ENCODE measurements at regions of chr3 and their contacts with region 1.

Region 1: DNA sequence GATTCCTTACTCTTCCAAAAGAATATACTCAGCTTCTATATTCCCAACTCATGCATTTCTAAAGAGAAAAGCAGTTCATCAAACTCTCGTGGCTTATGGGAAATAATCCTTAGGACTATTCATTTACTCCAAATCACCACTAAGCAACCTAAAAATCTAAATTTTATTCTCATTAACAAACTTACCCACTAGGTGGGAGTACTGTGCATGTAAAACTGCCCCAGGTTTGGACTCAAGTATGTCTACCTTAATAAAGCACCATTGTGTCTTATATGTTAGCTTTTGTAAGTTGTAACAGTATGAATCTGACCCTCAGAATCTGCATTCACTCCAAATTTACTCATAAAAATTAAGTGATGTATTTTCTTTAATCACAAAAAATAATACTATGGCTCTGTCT is 25.3 kb downstream of the RAD18 start:
- DNase-seq: no peak
- H3K4me3 ChIP-seq: no peak overlapping the region
- H3K27ac ChIP-seq: peak overlapping the region; percentile 84
- H3K4me1 ChIP-seq: peaks cover 29% of the 10 kb centered on the region
- H3K27me3 ChIP-seq: no peaks in the 10 kb centered on the region
- CTCF ChIP-seq: peak; percentile 66

Region 2: GRCh38 chr3:8678751-8679150 is 259.3 kb before region 1 on chr3:
- CTCF ChIA-PET with region 1: no interaction called
- POLR2A ChIA-PET with region 1: no interaction called
- intact Hi-C with region 1: loop called (anchors 2 kb)
- DNase-seq: no peak
- H3K4me3 ChIP-seq: peak overlapping the region; percentile 57; the same call in 1 of the 2 replicates
- H3K27ac ChIP-seq: peak overlapping the region; percentile 95
- H3K4me1 ChIP-seq: peaks cover 53% of the 10 kb centered on the region
- H3K27me3 ChIP-seq: no peaks in the 10 kb centered on the region
- CTCF ChIP-seq: no peak

Region 3: DNA sequence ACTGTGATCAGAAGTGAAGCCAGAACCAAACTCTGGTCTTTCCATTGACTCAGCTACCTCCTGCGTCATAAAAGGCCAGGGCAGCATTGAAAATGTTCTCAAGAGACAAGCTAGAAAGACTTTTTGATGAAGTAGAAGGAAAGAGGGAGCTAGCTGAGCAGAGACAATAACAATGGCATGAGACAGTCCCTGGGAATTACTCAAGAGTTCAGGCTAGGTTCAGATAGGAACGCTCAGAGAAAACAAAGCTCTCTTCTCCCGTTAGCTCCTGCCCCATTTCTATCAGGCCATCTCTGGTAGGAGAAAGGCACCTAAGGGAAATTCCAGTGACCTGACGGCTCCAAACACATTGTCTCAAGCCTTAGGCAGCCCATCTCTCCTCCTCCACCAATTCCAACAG is 161.6 kb before region 1 on chr3:
- CTCF ChIA-PET with region 1: no interaction called
- POLR2A ChIA-PET with region 1: no interaction called
- intact Hi-C with region 1: no loop called
- DNase-seq: peak in 1 of 2 experiments; percentile 15
- H3K4me3 ChIP-seq: no peak overlapping the region
- H3K27ac ChIP-seq: no peak overlapping the region
- H3K4me1 ChIP-seq: no peaks in the 10 kb centered on the region
- H3K27me3 ChIP-seq: no peaks in the 10 kb centered on the region
- CTCF ChIP-seq: no peak

Region 4: DNA sequence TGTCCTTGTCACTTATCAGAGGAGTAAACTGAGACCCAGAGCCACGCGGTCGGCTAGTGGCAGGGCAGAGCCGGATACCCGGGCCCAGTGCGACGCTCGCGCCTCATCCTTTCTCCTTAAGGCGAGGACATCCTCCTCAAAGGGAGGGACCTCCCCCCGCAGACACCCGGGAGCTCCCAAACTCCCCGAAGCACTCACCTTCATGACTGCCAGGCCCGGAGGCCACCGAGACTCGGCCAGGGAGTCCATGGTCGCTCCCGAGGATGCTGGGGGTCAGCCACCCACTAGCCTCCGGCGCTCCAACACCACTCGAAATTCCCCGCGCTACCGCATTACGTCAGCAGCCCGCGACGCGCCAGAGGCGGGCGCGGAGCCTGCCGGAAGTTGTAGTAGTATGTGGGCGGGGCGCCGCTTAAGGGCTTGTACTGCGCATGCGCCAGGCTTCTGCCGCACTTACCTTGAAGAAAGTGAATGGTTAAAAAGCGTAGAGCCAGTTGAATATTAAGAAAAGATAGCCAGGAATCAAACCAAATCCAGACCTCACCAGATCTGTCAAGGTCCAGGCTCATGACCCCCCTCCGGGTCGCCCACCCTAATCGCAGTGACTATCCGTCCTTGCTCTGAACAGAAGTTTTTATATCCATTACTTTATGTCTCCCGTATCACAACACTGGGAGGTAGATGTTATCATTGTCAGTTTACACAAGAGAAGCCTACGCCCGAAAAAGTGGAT is 25.3 kb after region 1 on chr3 and contains the start of gene RAD18:
- CTCF ChIA-PET with region 1: no interaction called
- POLR2A ChIA-PET with region 1: no interaction called
- intact Hi-C with region 1: loop called (anchors 1 kb)
- DNase-seq: peak; percentile 70 to 90
- H3K4me3 ChIP-seq: peak within 1 kb of the TSS; percentile 69
- H3K27ac ChIP-seq: peak within 1 kb of the TSS; percentile 77
- H3K4me1 ChIP-seq: peaks cover 37% of the 10 kb centered on the region
- H3K27me3 ChIP-seq: no peaks in the 10 kb centered on the region
- CTCF ChIP-seq: no peak
- total RNA-seq, gene RAD18: 19.1 and 29.1 TPM in 2 replicates

Region 5: DNA sequence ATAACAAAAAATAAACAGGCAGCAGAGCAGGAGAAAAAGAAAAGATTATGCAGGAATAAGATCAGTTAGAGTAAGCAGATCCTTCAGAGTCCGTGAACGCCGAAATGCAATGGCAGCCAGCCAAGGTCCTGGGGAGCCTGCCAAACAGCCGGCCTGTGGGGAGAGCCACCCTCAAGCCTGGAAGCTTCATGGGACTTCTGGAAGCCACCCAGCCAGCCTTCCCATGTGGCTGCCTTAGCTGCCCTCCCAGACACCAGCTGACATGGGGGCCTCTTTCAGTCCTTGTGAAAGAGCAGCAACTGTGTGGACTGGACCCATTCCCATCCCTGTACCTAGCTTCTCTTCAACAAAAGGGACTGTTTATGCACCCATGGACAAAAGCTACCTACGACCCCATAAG is 90.1 kb after region 1 on chr3:
- CTCF ChIA-PET with region 1: no interaction called
- POLR2A ChIA-PET with region 1: no interaction called
- intact Hi-C with region 1: no loop called
- DNase-seq: no peak
- H3K4me3 ChIP-seq: no peak overlapping the region
- H3K27ac ChIP-seq: no peak overlapping the region
- H3K4me1 ChIP-seq: no peaks in the 10 kb centered on the region
- H3K27me3 ChIP-seq: 0 out of 2 replicates have a peak, but pooled peaks cover 3% of the 10 kb centered on the region
- CTCF ChIP-seq: no peak